ENCODE measurements at regions of chr14 and their contacts with region 1.

Region 1: GRCh38 chr14:81220830-81221578 is at the start of gene GTF2A1:
- DNase-seq: peak; percentile 98
- H3K4me3 ChIP-seq: peak within 1 kb of the TSS; percentile 78 to 85 (median 80)
- H3K27ac ChIP-seq: peak within 1 kb of the TSS; percentile 90 to 97 (median 95)
- H3K4me1 ChIP-seq: peaks cover 0 to 33% (median 24%) of the 10 kb centered on the region in 4 donors
- H3K27me3 ChIP-seq: no peaks in the 10 kb centered on the region
- CTCF ChIP-seq: no peak
- EP300 ChIP-seq: no peak
- POLR2A ChIP-seq: peak; percentile 67 to 68
- total RNA-seq, gene GTF2A1: 14.7 to 21.8 (median 20.9) TPM

Region 2: GRCh38 chr14:80996049-80996901 is 224.7 kb before region 1 on chr14:
- intact Hi-C with region 1: loop called (anchors 10 kb)
- DNase-seq: no peak
- H3K4me3 ChIP-seq: no peak overlapping the region
- H3K27ac ChIP-seq: no peak overlapping the region
- H3K4me1 ChIP-seq: no peaks in the 10 kb centered on the region
- H3K27me3 ChIP-seq: peaks cover 0 to 1% (median 0%) of the 10 kb centered on the region in 3 donors
- CTCF ChIP-seq: peak; percentile 52 to 66 (median 59)
- EP300 ChIP-seq: no peak
- POLR2A ChIP-seq: no peak

Region 3: GRCh38 chr14:81122326-81122725 is 98.7 kb before region 1 on chr14:
- intact Hi-C with region 1: no loop called
- DNase-seq: no peak
- H3K4me3 ChIP-seq: no peak overlapping the region
- H3K27ac ChIP-seq: no peak overlapping the region
- H3K4me1 ChIP-seq: no peaks in the 10 kb centered on the region
- H3K27me3 ChIP-seq: no peaks in the 10 kb centered on the region
- CTCF ChIP-seq: no peak
- EP300 ChIP-seq: no peak
- POLR2A ChIP-seq: no peak

Region 4: GRCh38 chr14:81170104-81170828 is 50.7 kb before region 1 on chr14:
- intact Hi-C with region 1: loop called (anchors 2 kb)
- DNase-seq: peak; percentile 97
- H3K4me3 ChIP-seq: peak overlapping the region; percentile 59 to 74 (median 68)
- H3K27ac ChIP-seq: peak overlapping the region; percentile 90 to 93 (median 92)
- H3K4me1 ChIP-seq: peaks cover 0 to 14% (median 9%) of the 10 kb centered on the region in 4 donors
- H3K27me3 ChIP-seq: no peaks in the 10 kb centered on the region
- CTCF ChIP-seq: peak; percentile 55 to 89 (median 85)
- EP300 ChIP-seq: no peak
- POLR2A ChIP-seq: peak; percentile 21 to 60

Region 5: GRCh38 chr14:81533536-81534343 is 312.7 kb after region 1 on chr14 and contains the start of gene SEL1L:
- intact Hi-C with region 1: loop called (anchors 5 kb)
- DNase-seq: peak; percentile 100
- H3K4me3 ChIP-seq: peak within 1 kb of the TSS; percentile 78 to 96 (median 93)
- H3K27ac ChIP-seq: peak within 1 kb of the TSS; percentile 70 to 84 (median 80)
- H3K4me1 ChIP-seq: peaks cover 0 to 49% (median 38%) of the 10 kb centered on the region in 4 donors
- H3K27me3 ChIP-seq: no peaks in the 10 kb centered on the region
- CTCF ChIP-seq: no peak
- EP300 ChIP-seq: no peak
- POLR2A ChIP-seq: peak; percentile 58 to 77
- total RNA-seq, gene SEL1L: 52.0 to 74.8 (median 54.8) TPM

Region 6: DNA sequence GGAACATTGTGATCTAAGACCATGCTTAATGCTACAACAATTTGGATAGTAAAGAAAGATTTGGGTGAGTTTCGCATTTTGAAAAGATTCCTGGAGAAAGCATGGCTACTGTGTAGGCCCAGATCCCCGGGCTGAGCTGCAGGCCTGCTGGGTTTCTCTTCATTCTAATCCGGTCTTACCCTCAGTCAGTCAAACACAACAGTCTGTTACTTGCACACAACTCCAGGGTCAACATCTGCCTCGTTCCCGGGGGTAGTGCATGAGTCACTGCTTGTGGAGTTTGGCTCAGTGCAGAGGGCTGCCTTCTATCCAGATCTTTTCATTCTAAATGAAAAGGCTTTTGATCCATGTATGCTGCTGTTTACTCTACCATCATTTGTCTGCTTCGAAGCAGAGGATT is 373.0 kb after region 1 on chr14:
- intact Hi-C with region 1: no loop called
- DNase-seq: peak; percentile 65
- H3K4me3 ChIP-seq: no peak overlapping the region
- H3K27ac ChIP-seq: no peak overlapping the region
- H3K4me1 ChIP-seq: no peaks in the 10 kb centered on the region
- H3K27me3 ChIP-seq: no peaks in the 10 kb centered on the region
- CTCF ChIP-seq: no peak
- EP300 ChIP-seq: no peak
- POLR2A ChIP-seq: no peak

Measured in sigmoid colon (tissue), 7 donors.